ENCODE measurements at regions of chr21 and their contacts with region 1.

Region 1: GRCh38 chr21:35840197-35840799 is 220.0 kb downstream of the SETD4 start:
- DNase-seq: peak; percentile 78
- H3K4me3 ChIP-seq: no peak overlapping the region
- H3K27ac ChIP-seq: no peak overlapping the region
- H3K4me1 ChIP-seq: no peaks in the 10 kb centered on the region
- H3K27me3 ChIP-seq: peaks cover 0 to 2% of the 10 kb centered on the region in 2 experiments
- CTCF ChIP-seq: peak; percentile 65 to 71
- POLR2A ChIP-seq: no peak

Region 2: DNA sequence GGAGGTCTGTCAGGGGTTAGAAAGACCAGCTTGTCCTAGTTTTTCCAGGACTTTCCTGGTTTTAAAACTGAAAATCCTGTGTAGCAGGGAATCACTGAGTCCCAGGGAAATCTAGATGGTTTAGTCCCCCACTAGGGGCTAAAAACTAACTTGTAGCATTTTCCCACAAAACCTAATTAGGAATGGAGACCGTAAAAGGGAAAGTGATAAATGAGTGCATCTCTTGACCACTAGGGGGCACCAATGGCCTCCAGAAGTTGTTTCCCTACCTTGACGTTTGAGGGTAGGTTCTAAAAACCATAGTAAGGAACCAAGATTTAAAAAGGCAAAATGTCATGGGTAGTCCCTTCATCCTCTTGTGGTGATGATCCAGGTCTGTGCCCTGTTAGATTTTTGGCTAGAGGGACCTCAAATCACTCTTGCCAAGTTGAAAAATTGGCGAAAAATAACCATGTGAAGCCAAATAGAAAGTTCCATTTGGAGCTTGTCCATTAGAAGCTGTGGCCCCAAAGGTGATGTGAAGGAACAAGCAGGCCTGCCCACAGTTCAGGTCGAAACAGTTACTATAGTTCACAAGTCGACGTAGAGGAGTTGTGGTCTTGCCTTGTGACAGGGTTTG is 1147.0 kb before region 1 on chr21:
- CTCF ChIA-PET with region 1: interaction called, 107 read pairs
- POLR2A ChIA-PET with region 1: no interaction called
- dilution Hi-C with region 1: no loop called
- intact Hi-C with region 1: loop called (anchors 2 kb)
- DNase-seq: peak; percentile 57
- H3K4me3 ChIP-seq: no peak overlapping the region
- H3K27ac ChIP-seq: no peak overlapping the region
- H3K4me1 ChIP-seq: no peaks in the 10 kb centered on the region
- H3K27me3 ChIP-seq: peaks cover 14 to 30% of the 10 kb centered on the region in 2 experiments
- CTCF ChIP-seq: peak; percentile 79 to 81
- POLR2A ChIP-seq: no peak

Region 3: GRCh38 chr21:35616090-35616489 is 224.2 kb before region 1 on chr21:
- CTCF ChIA-PET with region 1: interaction called, 12 read pairs
- POLR2A ChIA-PET with region 1: no interaction called
- dilution Hi-C with region 1: no loop called
- intact Hi-C with region 1: no loop called
- DNase-seq: peak; percentile 58
- H3K4me3 ChIP-seq: no peak overlapping the region
- H3K27ac ChIP-seq: no peak overlapping the region
- H3K4me1 ChIP-seq: peaks cover 13% of the 10 kb centered on the region
- H3K27me3 ChIP-seq: no peaks in the 10 kb centered on the region
- CTCF ChIP-seq: peak; percentile 6 to 25
- POLR2A ChIP-seq: no peak

Region 4: DNA sequence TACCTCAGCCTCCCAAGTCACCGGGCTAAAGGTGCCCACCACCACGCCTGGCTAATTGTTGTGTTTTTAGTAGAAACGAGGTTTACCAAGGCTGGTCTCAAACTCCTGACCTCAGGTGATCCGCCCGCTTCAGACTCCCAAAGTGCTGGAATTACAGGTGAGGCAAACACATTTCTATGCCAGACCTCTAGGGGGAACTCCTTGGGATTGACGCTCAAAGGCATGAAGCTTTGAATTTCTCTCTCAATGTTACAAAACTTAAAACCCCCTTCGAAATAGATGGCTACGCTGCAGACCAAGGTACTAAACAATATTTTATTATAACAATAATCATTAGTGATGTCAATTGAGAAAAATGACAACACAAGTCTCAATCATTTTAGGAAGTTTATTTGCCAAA is 110.0 kb before region 1 on chr21:
- CTCF ChIA-PET with region 1: no interaction called
- POLR2A ChIA-PET with region 1: no interaction called
- dilution Hi-C with region 1: no loop called
- intact Hi-C with region 1: no loop called
- DNase-seq: no peak
- H3K4me3 ChIP-seq: no peak overlapping the region
- H3K27ac ChIP-seq: no peak overlapping the region
- H3K4me1 ChIP-seq: no peaks in the 10 kb centered on the region
- H3K27me3 ChIP-seq: peaks cover 2 to 28% of the 10 kb centered on the region in 2 experiments
- CTCF ChIP-seq: no peak
- POLR2A ChIP-seq: no peak

Region 5: DNA sequence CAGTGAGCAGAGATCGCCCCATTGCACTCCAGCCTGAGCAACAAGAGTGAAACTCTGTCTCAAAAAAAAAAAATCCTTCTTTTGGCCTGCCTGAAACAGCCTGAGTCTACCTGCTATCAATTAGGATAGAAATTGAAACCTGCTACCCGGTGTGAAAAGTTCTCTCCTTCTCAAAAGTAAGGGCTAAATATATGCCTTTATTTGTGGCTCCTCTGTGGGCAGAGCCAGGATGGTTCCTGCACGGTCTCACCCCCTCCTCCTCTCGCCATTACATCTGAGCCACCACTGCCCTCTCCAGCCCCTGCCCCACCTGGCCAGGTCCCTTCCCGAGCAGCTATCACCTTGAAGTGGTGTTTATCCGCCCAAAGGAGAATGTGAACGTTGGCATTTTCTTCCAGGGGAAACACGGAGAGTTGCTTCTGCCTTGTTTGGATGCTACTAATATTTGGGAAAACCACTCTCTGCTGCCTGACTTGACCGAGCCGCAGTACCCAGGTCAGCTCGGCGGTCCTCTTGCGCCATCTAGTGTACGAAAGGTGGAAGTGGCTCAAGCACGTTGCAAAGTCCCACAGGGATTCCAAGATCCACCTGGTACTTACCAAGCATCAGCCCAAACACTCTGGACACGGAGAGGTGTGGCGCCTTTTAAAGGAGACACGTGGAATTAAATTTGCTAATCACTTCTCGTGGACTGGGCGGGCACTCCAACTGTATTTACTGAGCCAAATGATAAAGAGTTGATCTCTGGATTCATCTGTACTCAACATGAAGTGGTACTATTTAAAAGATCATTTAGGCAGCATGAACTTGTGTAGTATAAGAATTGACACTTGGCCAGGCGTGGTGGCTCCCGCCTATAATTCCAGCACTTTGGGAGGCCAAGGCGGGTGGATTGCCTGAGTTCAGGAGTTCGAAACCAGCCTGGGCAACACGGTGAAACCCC is 188.1 kb after region 1 on chr21:
- CTCF ChIA-PET with region 1: interaction called, 14 read pairs
- POLR2A ChIA-PET with region 1: no interaction called
- dilution Hi-C with region 1: no loop called
- intact Hi-C with region 1: loop called (anchors 1 kb)
- DNase-seq: peak; percentile 73
- H3K4me3 ChIP-seq: no peak overlapping the region
- H3K27ac ChIP-seq: no peak overlapping the region
- H3K4me1 ChIP-seq: no peaks in the 10 kb centered on the region
- H3K27me3 ChIP-seq: peaks cover 0 to 2% of the 10 kb centered on the region in 2 experiments
- CTCF ChIP-seq: peak; percentile 90 to 92
- POLR2A ChIP-seq: no peak

Measured in endothelial cell of umbilical vein (primary cell).